ENCODE measurements at regions of chr14 and their contacts with region 1.

Region 1: DNA sequence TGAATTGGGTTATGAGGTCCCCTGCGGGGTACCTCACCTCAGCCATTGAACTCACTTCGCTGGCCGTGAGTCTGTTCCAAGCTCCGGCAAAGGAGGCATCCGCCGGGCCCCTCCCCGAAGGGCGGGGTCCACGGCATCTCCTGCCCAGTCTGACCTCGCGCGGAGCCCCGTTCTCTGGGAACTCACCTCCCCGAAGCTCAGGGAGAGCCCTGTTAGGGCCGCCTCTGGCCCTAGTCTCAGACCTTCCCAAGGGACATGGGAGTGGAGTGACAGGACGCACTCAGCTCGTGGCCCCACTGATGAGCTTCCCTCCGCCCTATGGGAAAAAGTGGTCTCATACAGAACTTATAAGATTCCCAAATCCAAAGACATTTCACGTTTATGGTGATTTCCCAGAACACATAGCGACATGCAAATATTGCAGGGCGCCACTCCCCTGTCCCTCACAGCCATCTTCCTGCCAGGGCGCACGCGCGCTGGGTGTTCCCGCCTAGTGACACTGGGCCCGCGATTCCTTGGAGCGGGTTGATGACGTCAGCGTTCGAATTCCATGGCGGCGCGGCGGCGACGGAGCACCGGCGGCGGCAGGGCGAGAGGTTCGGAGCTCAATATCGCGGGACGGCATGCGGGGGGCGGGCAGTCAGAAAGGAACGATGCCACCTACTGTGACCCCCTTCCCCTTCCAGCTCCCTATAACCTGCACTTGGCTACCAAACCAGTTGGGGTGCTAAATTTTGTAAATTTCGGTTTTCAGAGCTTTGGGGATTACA is at the start of gene PARP2:
- DNase-seq: peak; percentile 87
- ATAC-seq: peak; percentile 87
- H3K4me3 Mint-ChIP-seq: peak within 1 kb of the TSS; percentile 98
- H3K27ac Mint-ChIP-seq: peak within 1 kb of the TSS; percentile 97
- H3K4me1 Mint-ChIP-seq: peaks cover 12% of the 10 kb centered on the region
- H3K27me3 Mint-ChIP-seq: no peaks in the 10 kb centered on the region
- CTCF ChIP-seq: no peak
- total RNA-seq, gene PARP2: 17.1 and 19.5 TPM in 2 replicates

Region 2: GRCh38 chr14:20327005-20327869 is 16.0 kb before region 1 on chr14:
- CTCF ChIA-PET with region 1: interaction called, 18 read pairs
- POLR2A ChIA-PET with region 1: interaction called, 60 read pairs
- intact Hi-C with region 1: loop called (anchors 1 kb)
- DNase-seq: no peak
- ATAC-seq: peak; percentile 49
- H3K4me3 Mint-ChIP-seq: no peak overlapping the region
- H3K27ac Mint-ChIP-seq: peak overlapping the region; percentile 42
- H3K4me1 Mint-ChIP-seq: peaks cover 26% of the 10 kb centered on the region
- H3K27me3 Mint-ChIP-seq: no peaks in the 10 kb centered on the region
- CTCF ChIP-seq: no peak

Region 3: GRCh38 chr14:20365928-20366327 is 22.7 kb after region 1 on chr14:
- CTCF ChIA-PET with region 1: no interaction called
- POLR2A ChIA-PET with region 1: interaction called, 32 read pairs
- intact Hi-C with region 1: loop called (anchors 1 kb)
- DNase-seq: no peak
- ATAC-seq: no peak
- H3K4me3 Mint-ChIP-seq: no peak overlapping the region
- H3K27ac Mint-ChIP-seq: peak overlapping the region; percentile 53
- H3K4me1 Mint-ChIP-seq: peaks cover 6% of the 10 kb centered on the region
- H3K27me3 Mint-ChIP-seq: no peaks in the 10 kb centered on the region
- CTCF ChIP-seq: no peak

Region 4: GRCh38 chr14:20454516-20455354 is 111.5 kb after region 1 on chr14 and contains the starts of genes APEX1 and OSGEP:
- CTCF ChIA-PET with region 1: no interaction called
- POLR2A ChIA-PET with region 1: interaction called, 30 read pairs
- intact Hi-C with region 1: loop called (anchors 1 kb)
- DNase-seq: peak; percentile 88
- ATAC-seq: peak; percentile 88
- H3K4me3 Mint-ChIP-seq: peak within 1 kb of the TSS; percentile 56
- H3K27ac Mint-ChIP-seq: no peak within 1 kb of the TSS
- H3K4me1 Mint-ChIP-seq: peaks cover 35% of the 10 kb centered on the region
- H3K27me3 Mint-ChIP-seq: no peaks in the 10 kb centered on the region
- CTCF ChIP-seq: no peak
- total RNA-seq, gene APEX1: 215 and 231 TPM in 2 replicates
- total RNA-seq, gene OSGEP: 98.3 and 112 TPM in 2 replicates

Region 5: DNA sequence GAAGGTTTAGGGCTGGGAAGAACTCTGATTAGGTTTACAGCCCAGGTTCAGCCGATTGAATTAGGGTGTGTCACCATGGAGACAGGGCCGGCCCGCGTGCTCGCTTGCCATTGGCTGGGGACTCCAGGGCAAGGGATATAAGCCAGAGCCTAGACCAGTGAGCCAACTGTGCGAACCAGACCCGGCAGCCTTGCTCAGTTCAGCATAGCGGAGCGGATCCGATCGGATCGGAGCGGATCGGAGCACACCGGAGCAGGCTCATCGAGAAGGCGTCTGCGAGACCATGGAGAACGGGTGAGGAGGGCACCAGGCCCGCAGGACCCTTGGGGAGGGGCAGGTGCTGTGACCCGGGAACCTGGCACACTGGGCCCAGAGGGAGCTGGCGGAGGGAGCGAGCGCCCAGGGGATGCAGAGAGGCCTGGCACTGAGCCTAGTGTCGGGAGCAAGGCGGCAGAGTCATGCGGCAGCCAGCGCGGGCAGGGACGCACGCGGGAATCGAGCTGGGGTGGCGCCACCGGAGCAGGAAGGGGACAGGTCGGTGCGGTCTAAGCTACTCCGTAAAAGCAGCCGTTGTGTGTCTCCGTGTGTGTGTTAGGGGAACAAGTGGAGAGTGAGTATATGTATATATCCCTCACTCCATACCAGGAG is 126.1 kb after region 1 on chr14 and contains the start of gene PNP:
- CTCF ChIA-PET with region 1: no interaction called
- POLR2A ChIA-PET with region 1: interaction called, 15 read pairs
- intact Hi-C with region 1: loop called (anchors 2 kb)
- DNase-seq: peak; percentile 78
- ATAC-seq: peak; percentile 89
- H3K4me3 Mint-ChIP-seq: peak within 1 kb of the TSS; percentile 95
- H3K27ac Mint-ChIP-seq: peak within 1 kb of the TSS; percentile 93
- H3K4me1 Mint-ChIP-seq: peaks cover 42% of the 10 kb centered on the region
- H3K27me3 Mint-ChIP-seq: no peaks in the 10 kb centered on the region
- CTCF ChIP-seq: no peak
- total RNA-seq, gene PNP: 87.2 and 88.0 TPM in 2 replicates

Region 6: DNA sequence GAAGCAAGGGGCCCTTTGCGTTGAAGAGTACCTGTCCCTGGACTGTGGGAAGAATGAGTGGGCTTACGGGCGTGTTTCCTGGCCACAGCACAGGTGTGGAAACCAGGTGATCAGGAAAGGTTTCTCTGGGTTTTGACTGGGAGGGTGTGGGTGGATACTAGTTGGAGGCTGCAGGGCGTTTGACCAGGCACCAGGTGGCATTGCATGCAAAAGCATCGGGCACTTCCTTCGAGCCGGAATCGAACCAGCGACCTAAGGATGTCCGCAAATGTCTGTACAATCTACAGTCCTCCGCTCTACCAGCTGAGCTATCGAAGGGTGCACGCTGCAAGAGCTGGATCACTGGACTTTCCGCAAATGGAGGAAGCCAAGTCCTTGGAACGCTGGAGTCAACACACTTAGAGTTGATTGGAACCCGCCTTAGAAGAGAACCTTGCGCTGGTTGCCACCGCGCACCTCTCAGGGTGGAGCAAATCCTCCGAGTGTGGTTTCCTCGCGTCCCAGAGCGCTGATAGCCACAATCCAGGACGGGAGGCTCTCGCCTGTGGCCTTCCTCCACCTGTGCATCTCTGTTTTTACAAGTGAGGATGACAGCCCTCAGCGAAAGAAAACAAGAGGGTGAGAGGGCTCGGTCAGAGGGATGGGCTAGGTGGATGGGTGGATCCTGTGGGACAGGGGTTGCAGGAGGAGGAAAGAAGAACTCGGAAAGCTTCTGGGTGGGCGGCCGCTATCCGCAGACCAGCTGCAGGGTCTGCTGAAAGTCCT is 319.9 kb after region 1 on chr14:
- CTCF ChIA-PET with region 1: no interaction called
- POLR2A ChIA-PET with region 1: interaction called, 7 read pairs
- intact Hi-C with region 1: loop called (anchors 1 kb)
- DNase-seq: peak; percentile 67
- ATAC-seq: peak; percentile 85
- H3K4me3 Mint-ChIP-seq: peak overlapping the region; percentile 87
- H3K27ac Mint-ChIP-seq: peak overlapping the region; percentile 67
- H3K4me1 Mint-ChIP-seq: peaks cover 53% of the 10 kb centered on the region
- H3K27me3 Mint-ChIP-seq: no peaks in the 10 kb centered on the region
- CTCF ChIP-seq: no peak

Region 7: GRCh38 chr14:20989572-20990551 is 646.6 kb after region 1 on chr14 and contains the start of gene METTL17:
- CTCF ChIA-PET with region 1: no interaction called
- POLR2A ChIA-PET with region 1: no interaction called
- intact Hi-C with region 1: loop called (anchors 1 kb)
- DNase-seq: peak; percentile 68
- ATAC-seq: peak; percentile 97
- H3K4me3 Mint-ChIP-seq: peak within 1 kb of the TSS; percentile 94
- H3K27ac Mint-ChIP-seq: peak within 1 kb of the TSS; percentile 89
- H3K4me1 Mint-ChIP-seq: peaks cover 31% of the 10 kb centered on the region
- H3K27me3 Mint-ChIP-seq: no peaks in the 10 kb centered on the region
- CTCF ChIP-seq: no peak
- total RNA-seq, gene METTL17: 94.2 and 94.7 TPM in 2 replicates